ENCODE measurements at regions of chr15 and their contacts with region 1.

Region 1: DNA sequence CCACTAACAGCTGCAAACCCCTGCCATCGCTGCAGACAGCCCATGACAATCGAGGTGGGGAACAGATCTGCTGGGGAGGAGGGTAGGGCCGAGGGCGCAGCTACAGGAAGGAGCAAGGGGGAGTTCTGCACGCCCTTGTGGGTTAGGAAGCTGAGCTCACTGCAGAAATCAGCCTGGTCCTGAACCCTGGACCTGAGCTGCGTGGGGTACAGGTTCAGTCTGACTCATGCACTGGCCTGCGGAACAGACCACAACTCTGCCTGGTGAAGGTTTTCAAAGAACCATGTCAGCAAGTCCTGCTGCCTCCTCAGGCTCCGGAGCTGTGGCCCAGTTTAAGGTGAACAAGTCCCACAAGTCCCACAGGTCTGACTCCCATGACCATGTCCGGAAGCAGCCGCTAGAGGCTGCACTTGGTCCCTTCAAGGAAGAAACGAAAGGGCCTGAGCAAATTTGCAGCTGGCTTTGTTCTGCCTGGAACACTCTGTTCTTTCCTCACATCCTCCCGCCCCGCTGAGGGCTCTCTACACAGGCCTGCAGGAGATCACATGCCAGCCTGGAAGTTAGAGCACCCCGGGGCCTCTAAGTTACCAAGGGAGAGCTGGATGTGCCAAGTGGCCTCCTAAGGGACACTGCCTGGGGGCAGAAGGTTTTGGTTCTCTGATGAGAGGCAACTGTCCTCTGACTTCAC is 49.4 kb upstream of the AKAP13 start:
- DNase-seq: peak; percentile 63
- H3K4me3 ChIP-seq: peak overlapping the region; percentile 41
- CTCF ChIP-seq: peak; percentile 86

Region 2: DNA sequence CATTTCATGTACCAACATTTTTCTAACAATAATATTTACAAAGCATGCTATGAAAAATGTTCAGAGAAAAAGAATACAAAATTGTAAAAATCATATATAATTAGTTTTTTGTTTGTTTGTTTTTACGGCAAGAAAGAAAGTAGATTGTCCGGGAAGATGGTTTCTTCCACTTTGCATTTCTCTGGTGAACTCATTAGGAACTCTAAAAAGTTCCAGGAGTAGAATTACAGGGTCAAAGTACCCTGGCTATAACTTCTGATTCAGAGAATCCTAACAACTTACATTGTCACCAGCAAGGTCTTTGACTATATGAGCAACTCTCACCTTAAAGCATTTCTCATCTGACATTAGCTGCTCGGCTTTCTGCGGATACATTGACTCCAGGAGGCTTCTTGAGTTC is 152.7 kb before region 1 on chr15:
- CTCF ChIA-PET with region 1: no interaction called
- POLR2A ChIA-PET with region 1: no interaction called
- DNase-seq: no peak
- H3K4me3 ChIP-seq: no peak overlapping the region
- CTCF ChIP-seq: no peak

Region 3: DNA sequence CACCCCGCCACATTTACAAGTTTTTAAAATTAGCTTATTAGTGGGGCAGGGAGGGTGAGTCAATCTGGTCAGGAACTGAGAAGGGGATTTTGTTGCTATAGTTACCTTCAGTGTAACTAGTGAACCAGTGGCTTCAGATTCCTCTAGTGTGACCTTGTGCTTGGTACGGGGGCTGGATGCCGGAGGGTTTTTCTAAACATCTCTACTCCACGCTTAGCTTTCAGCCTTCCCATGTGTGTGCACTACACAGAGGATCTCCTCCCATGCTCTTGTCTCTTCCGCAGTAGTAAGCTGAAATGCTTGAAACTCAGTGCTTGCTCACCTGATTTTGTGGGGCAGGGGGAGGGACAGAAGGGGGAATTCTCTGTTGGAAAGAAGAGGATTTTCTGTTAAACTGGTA is 18.6 kb before region 1 on chr15:
- CTCF ChIA-PET with region 1: interaction called, 76 read pairs
- POLR2A ChIA-PET with region 1: interaction called, 6 read pairs
- DNase-seq: no peak
- H3K4me3 ChIP-seq: no peak overlapping the region
- CTCF ChIP-seq: no peak

Region 4: DNA sequence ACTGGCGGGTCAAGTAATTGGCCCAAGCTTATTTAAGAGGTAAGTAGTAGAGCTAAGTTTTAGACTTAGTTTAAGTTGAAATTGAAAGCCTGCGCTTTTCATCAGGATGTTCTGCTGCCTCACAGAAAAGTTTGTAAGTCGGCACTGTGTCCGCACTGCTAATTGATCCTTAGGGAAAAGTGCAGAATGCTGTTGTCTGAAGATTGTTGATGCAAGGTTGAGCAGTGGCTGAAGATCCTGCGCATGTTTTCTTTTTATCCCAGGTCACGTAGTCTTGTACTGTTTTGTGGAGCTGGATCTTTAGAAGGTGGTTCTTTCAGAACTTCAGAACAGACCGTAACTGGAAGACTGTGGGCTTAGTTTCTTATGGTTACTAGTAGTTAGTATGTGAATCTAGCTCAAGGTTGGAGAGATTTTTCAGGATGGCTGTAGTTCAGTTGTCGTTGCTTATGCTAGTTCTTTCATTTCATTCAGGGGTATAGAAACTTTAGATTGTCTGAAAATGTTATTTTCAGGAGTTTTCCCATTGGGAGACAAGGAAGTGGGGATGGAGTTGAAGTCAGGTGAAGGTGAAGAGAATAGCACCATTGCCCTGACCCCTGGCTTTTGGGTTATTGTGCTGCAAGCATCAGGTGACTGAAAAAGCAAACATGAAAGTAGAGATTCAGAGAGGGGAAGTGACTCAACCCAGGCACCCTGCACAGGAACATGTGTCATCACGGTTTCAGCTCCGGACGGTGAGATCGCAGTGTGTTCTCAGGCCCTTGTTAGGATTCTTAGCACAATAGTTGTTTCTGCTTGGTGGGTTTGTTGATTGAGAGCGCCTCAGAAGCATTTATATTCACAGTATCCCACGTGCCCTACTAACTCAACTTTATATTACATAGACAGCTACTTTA is 82.2 kb after region 1 on chr15:
- CTCF ChIA-PET with region 1: interaction called, 51 read pairs
- POLR2A ChIA-PET with region 1: interaction called, 3 read pairs
- DNase-seq: peak; percentile 40
- H3K4me3 ChIP-seq: no peak overlapping the region
- CTCF ChIP-seq: no peak

Region 5: DNA sequence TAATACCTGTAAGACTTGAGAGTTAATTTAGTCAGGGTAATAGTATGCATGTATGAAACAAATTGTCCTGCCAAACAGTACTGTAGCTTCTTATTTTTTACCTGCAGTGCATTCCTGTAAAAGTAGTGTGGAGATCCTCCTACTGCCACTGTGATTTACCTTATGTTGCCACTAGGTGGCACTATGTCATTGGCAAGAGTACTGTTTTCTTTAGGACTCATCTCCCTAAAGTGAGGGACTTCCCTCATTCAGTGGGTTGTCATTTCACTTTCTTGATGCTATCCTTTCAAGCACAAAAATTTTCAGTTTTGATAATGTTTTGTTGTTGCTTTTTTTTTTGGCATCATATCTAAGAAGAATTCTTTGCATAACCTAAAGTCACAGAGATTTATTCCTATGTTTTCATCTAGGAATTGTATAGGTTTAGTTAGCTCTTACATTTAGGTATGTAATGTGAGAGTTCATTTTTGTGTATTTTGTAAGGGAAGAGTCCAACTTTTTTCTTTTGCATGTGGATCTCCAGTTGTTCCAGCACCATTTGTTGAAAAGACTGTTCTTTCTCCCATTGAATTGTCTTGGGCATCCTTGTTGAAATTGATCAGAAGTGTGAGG is 155.0 kb after region 1 on chr15:
- CTCF ChIA-PET with region 1: interaction called, 13 read pairs
- POLR2A ChIA-PET with region 1: no interaction called
- DNase-seq: no peak
- H3K4me3 ChIP-seq: no peak overlapping the region
- CTCF ChIP-seq: peak; percentile 65

Region 6: GRCh38 chr15:85504749-85505676 is 174.0 kb after region 1 on chr15:
- CTCF ChIA-PET with region 1: interaction called, 40 read pairs
- POLR2A ChIA-PET with region 1: no interaction called
- DNase-seq: no peak
- H3K4me3 ChIP-seq: no peak overlapping the region
- CTCF ChIP-seq: peak; percentile 34

Region 7: GRCh38 chr15:85568261-85568808 is 237.3 kb after region 1 on chr15:
- CTCF ChIA-PET with region 1: no interaction called
- POLR2A ChIA-PET with region 1: no interaction called
- DNase-seq: no peak
- H3K4me3 ChIP-seq: no peak overlapping the region
- CTCF ChIP-seq: no peak

Region 8: GRCh38 chr15:85821545-85821944 is 490.5 kb after region 1 on chr15:
- CTCF ChIA-PET with region 1: no interaction called
- POLR2A ChIA-PET with region 1: no interaction called
- DNase-seq: no peak
- H3K4me3 ChIP-seq: no peak overlapping the region
- CTCF ChIP-seq: no peak

Measured in AG04449 (cell line).